GM10248 (cell line): ENCODE measurements at regions of chr15 and their contacts with region 1.

Region 1: DNA sequence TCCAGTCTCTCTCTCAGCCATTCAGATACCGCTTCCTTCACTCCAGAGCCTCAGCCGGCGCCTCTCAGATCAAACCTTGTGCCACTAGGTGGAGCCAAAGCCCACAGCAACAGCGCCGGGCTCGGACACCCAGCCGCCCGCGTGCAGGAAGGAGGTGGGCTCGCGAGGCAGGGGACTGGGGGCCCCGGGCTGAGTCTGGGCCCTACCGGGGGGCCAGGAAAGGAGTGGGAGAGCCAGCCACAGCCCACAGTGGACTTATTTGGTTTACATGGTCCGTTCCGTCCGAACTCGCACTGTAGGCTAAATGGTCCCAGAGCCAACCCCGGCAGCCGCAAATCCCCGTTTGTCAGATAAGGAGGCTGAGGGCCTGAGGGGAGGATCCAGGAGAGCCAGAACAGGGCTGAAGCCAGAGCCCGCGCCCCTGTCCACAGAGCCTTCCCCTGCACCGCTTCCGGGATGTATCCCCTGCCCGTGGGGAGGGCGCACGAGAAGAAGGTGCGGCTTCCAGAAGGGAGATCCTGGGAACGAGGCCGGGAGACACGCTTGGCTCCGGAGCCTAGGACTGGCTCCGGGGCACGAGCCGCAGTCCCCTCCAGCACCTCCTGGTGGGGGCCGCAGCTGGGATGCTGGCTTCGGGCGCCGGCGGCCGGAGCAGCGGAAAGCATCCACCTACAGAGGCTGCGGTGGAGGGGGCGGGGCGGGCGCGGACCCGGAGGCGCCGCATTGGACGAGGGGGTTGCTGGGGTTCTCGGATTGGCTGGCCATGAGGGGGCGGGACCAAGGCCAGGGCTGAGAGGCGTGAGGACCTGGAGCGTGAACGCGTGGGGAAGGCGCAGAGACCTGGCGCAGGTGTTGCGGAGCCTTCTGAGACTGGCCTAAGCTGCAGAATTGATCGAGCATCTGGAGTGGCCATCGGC is 6.5 kb upstream of the CYP11A1 start:
- DNase-seq: peak; percentile 96
- CTCF ChIP-seq: peak; percentile 96

Region 2: DNA sequence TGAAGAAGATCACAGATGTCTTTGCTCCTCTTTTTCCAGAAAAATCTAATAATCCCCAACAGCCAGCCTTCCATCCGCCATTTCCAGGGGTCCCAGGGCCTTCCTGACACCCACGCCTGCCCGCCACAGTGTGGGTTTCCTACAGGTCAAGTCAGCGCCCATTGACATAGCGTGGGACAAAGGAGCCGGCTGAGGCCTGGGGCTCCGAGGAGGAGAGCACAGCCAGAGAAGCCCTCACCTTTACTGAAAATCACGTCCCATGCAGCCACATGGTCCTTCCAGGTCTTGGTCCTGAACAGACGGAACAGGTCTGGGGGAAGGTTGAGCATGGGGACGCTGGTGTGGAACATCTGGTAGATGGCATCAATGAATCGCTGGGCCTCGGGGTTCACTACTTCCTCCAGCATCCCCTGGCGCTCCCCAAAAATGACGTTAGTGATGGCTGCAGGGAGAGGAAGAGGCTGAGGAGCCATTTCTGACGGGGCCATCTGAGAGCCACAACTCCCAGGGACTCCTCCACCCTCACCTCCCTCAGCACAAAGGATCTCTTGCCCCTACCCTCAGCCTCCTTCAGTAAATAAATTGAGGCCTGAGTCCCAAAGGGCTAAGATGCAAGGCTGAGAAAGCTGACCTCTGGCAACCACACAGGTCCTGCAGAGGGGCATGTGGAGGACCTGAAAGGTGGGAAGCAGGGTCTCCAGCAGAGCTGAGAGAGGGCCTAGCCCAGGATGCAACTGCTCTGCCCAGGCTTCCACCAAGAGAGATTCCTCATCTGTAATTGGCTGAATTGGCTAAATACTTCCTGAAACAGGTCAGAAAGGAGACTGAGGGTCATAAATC is 30.2 kb before region 1 on chr15:
- CTCF ChIA-PET with region 1: no interaction called
- POLR2A ChIA-PET with region 1: no interaction called
- DNase-seq: no peak
- CTCF ChIP-seq: no peak

Region 3: DNA sequence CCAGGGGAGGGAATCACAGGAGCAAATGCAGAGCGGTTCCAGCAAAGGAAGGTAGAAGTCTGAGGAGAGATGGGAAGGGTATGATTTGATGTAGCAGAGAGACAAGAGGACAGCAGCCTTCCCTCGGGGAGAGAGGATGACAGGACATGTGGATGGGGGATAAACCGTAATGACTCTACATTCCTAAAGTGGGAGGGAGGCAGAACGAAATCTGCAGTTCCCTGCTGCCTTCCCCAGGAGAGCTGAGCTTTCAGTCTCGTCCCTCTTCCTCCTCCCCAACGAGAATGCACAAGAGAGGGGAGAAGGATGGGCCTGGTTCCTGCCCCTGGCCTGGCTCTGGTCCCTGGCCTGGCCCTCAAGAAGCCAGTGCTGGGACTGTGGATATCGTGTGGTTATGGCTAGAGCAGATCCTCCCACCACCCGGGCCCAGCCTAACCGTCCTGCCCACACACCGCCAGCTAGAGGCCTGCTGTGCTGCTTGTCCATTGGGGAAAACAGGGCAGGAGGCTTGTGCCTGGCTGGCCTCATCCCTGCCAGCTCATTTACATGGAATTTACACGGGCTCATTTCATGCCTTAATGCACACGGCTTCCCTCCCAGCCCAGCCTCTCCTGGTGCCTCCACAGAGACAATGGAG is 33.2 kb after region 1 on chr15:
- CTCF ChIA-PET with region 1: interaction called, 10 read pairs
- POLR2A ChIA-PET with region 1: interaction called, 3 read pairs
- DNase-seq: no peak
- CTCF ChIP-seq: no peak

Region 4: GRCh38 chr15:74460871-74461846 is 87.2 kb after region 1 on chr15 and contains the start of gene UBL7:
- CTCF ChIA-PET with region 1: interaction called, 17 read pairs
- POLR2A ChIA-PET with region 1: no interaction called
- DNase-seq: peak; percentile 96
- CTCF ChIP-seq: peak; percentile 47

Region 5: GRCh38 chr15:74489518-74490338 is 115.7 kb after region 1 on chr15:
- CTCF ChIA-PET with region 1: interaction called, 77 read pairs
- POLR2A ChIA-PET with region 1: no interaction called
- DNase-seq: peak; percentile 81
- CTCF ChIP-seq: peak; percentile 69

Region 6: DNA sequence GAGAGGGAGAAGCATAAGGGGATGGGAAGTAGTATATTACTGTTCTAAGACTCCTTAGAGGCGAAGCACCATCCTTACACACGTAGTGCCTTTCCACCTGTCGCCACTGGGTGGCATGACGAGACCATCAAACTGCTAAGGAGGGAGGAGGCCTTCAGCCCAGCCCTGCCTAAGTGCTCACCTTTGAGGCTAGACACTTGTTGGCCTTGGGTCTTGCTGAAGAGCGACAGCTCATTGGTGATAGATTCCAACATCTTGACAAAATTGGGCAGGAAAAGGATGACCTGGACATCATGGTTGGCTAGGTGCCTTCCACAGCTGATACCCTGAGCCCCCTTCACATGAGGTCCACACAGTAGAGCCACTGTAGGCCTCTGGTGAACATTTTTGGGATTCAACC is 261.2 kb after region 1 on chr15:
- CTCF ChIA-PET with region 1: interaction called, 98 read pairs
- POLR2A ChIA-PET with region 1: no interaction called
- DNase-seq: peak; percentile 77
- CTCF ChIP-seq: peak; percentile 86